K562 (cell line): ENCODE measurements at regions of chr17 and their contacts with region 1.

Region 1: GRCh38 chr17:38893607-38894006 is 23.7 kb downstream of the LASP1 start:
- DNase-seq: peak in 1 of 4 experiments; percentile 43
- ATAC-seq: peak; percentile 41
- H3K4me3 ChIP-seq: no peak overlapping the region
- H3K27ac ChIP-seq: peak overlapping the region; percentile 16; the same call in 1 of the 3 replicates
- H3K4me1 ChIP-seq: peaks cover 36 to 44% of the 10 kb centered on the region in 2 experiments
- H3K27me3 ChIP-seq: no peaks in the 10 kb centered on the region
- CTCF ChIP-seq: no peak
- EP300 ChIP-seq: no peak
- POLR2A ChIP-seq: no peak
- RAD21 ChIP-seq: no peak

Region 2: DNA sequence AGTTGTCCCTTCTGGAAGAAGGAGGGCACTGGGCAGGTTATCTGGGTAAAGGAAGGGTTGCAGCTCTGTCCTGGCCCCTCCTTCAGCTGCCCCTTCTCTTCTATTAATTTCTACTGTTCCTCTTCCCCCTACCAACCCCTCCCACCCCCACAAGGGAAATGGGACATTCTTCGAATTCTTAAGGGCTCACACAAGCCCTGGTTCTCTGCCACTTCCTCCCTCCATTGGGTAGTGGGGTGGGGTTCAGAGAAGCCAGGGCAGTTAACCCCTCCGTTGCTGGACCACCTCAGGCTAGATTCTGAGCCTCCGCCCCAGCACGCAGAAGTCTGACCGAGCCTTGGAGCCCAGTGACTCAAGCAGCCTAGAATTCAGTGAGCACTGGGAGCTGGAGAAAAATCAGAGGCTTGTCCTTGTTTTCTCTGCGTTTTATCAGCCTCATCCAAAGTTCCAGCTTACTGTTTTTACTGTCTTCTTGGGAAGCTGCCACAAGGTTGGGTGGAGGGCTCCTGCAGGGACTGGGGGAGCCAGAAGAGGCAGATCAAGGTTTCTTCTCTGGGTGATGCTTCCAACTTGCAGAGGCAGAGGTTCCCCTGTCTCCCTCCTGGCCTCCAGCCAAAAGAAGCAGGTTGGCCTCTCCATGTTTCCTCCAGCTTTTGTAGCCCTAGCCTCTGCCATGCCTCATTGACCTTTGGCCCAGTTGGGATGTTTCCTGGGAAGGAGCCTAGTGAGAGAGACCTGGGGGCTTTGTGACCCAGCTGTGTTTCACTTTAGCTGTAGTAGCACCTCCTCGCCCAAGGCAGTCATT is 13.5 kb before region 1 on chr17:
- CTCF ChIA-PET with region 1: no interaction called
- POLR2A ChIA-PET with region 1: interaction called, 10 read pairs
- in situ Hi-C with region 1: no loop called
- intact Hi-C with region 1: no loop called
- DNase-seq: peak in 1 of 4 experiments; percentile 14
- ATAC-seq: no peak
- H3K4me3 ChIP-seq: no peak overlapping the region
- H3K27ac ChIP-seq: no peak overlapping the region
- H3K4me1 ChIP-seq: peaks cover 9 to 15% of the 10 kb centered on the region in 2 experiments; a peak in 4 of 5 replicates
- H3K27me3 ChIP-seq: no peaks in the 10 kb centered on the region
- CTCF ChIP-seq: no peak
- EP300 ChIP-seq: no peak
- POLR2A ChIP-seq: no peak
- RAD21 ChIP-seq: no peak